BJ (cell line): ENCODE measurements at regions of chr12 and their contacts with region 1.

Region 1: DNA sequence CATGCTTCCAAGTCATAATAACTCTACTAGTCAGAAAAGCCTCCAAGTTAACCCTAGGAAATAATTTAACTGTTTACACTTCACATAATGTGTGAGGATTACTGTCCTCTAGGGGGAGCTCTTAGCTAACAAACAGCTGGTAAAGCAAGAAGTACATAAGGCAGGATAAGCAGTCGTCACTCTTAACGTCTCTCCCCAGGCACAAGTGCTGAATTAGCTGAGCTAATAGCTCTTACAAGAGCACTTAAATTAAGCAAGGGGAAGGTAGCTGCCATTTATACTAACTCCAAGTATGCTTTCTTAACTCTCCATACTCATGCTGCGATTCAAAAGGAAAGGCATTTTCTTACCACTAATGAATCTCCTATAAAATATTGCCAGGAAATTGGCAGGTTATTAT is 79.3 kb upstream of the TSPAN11 start:
- DNase-seq: no peak
- H3K4me3 ChIP-seq: no peak overlapping the region
- H3K27me3 ChIP-seq: no peaks in the 10 kb centered on the region
- CTCF ChIP-seq: peak; percentile 65

Region 2: GRCh38 chr12:30457621-30458289 is 389.5 kb before region 1 on chr12:
- CTCF ChIA-PET with region 1: no interaction called
- POLR2A ChIA-PET with region 1: no interaction called
- DNase-seq: peak; percentile 0
- H3K4me3 ChIP-seq: no peak overlapping the region
- H3K27me3 ChIP-seq: no peaks in the 10 kb centered on the region
- CTCF ChIP-seq: peak; percentile 18; the same call in 1 of the 2 replicates

Region 3: GRCh38 chr12:30813525-30814294 is 33.5 kb before region 1 on chr12:
- CTCF ChIA-PET with region 1: no interaction called
- POLR2A ChIA-PET with region 1: no interaction called
- DNase-seq: no peak
- H3K4me3 ChIP-seq: no peak overlapping the region
- H3K27me3 ChIP-seq: peaks cover 3% of the 10 kb centered on the region
- CTCF ChIP-seq: no peak

Region 4: DNA sequence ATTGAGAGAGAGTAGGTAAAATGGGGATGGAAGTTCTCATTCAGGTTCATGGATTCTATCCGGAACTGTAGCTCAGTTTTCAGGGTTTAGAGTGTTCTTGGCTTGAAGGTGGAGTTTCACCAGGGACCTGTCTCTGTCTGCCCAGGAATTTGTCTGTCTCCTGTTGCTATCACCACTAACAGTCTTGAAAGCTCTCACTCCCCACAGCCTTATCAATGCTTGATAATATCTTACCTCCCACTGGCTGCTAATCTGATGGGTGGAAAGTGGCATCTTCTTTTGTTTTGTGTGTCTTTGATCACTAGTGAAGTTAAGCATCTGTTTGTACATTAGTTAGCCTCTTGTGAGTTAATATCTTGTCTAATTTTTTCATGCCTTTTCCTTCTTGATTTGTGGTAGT is 19.0 kb after region 1 on chr12:
- CTCF ChIA-PET with region 1: interaction called, 14 read pairs
- POLR2A ChIA-PET with region 1: no interaction called
- DNase-seq: no peak
- H3K4me3 ChIP-seq: no peak overlapping the region
- H3K27me3 ChIP-seq: no peaks in the 10 kb centered on the region; the same call in none of the 2 replicates
- CTCF ChIP-seq: no peak

Region 5: DNA sequence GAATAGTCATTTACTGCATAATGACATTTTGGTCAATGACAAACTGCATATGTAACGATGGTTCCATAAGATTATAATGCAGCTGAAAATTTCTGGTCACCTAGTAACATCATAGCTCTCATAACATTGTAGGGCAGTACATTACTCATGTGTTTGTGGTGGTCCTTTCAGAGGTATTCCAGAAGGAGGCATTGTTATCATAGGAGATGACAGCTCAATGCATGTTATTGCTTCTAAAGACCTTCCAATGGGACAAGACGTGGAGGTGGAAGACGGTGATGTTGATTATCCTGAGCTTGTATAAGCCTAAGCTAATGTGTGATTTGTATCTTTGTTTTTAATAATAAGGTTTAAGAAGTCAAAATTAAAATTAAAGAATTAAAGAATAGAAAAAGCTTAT is 35.4 kb after region 1 on chr12:
- CTCF ChIA-PET with region 1: interaction called, 10 read pairs
- POLR2A ChIA-PET with region 1: no interaction called
- DNase-seq: no peak
- H3K4me3 ChIP-seq: no peak overlapping the region
- H3K27me3 ChIP-seq: no peaks in the 10 kb centered on the region
- CTCF ChIP-seq: 0 out of 2 replicates have a peak, but pooled peaks have one; percentile 14

Region 6: DNA sequence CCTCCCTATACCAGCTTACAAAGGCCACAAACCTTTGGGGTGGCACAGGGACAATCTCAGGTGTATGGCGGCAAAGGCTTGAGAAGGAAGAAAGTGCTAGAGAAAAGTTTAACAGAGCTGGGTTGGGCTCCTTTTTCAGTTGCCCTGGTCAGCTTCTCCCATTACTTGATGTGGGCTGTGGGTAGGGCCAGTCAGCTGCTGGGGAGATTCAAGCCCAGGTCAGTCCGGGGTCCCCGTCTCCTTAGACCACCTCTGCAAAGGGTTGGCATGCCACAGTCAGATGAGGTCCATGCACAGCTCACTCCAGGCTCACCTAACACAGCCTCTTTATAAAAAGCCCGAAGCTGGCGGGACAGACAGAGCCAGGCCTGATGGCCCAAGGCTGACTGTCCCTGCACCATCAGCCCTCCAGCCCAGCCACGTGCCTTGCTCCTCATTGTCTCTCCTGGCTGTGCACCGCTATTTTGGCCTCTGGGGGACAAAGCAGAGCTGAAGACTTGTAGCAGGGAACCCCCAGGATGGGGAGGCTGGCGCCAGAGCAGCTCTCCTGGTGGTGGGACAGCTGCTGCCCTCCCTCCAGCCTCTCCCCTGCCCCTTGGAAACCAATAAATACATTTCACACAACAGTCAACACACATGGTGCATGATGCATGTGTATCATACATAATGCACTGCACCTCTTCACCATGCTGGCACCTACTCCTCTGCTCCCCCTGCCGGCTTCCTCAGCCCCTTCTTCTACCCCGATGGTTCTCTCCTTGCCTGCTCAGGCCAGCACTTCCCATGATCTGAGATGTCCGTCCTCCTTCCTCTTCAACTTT is 164.7 kb after region 1 on chr12:
- CTCF ChIA-PET with region 1: interaction called, 11 read pairs
- POLR2A ChIA-PET with region 1: no interaction called
- DNase-seq: no peak
- H3K4me3 ChIP-seq: no peak overlapping the region
- H3K27me3 ChIP-seq: no peaks in the 10 kb centered on the region; the same call in 1 of the 2 replicates
- CTCF ChIP-seq: 0 out of 2 replicates have a peak, but pooled peaks have one; percentile 23

Region 7: GRCh38 chr12:31238764-31239387 is 391.6 kb after region 1 on chr12:
- CTCF ChIA-PET with region 1: interaction called, 82 read pairs
- POLR2A ChIA-PET with region 1: no interaction called
- DNase-seq: no peak
- H3K4me3 ChIP-seq: no peak overlapping the region
- H3K27me3 ChIP-seq: peaks cover 9% of the 10 kb centered on the region
- CTCF ChIP-seq: peak; percentile 78

Region 8: GRCh38 chr12:32419520-32419960 is 1572.3 kb after region 1 on chr12:
- CTCF ChIA-PET with region 1: no interaction called
- POLR2A ChIA-PET with region 1: interaction called, 10 read pairs
- DNase-seq: no peak
- H3K4me3 ChIP-seq: no peak overlapping the region
- H3K27me3 ChIP-seq: no peaks in the 10 kb centered on the region
- CTCF ChIP-seq: no peak